ENCODE measurements at regions of chrX and their contacts with region 1.

Region 1: GRCh38 chrX:9662148-9662547 is 103.5 kb downstream of the GPR143 start:
- DNase-seq: peak; percentile 87
- ATAC-seq: peak; percentile 83
- H3K4me3 ChIP-seq: no peak overlapping the region
- H3K27ac ChIP-seq: peak overlapping the region; percentile 89
- H3K4me1 ChIP-seq: peaks cover 57% of the 10 kb centered on the region
- H3K27me3 ChIP-seq: no peaks in the 10 kb centered on the region
- CTCF ChIP-seq: no peak

Region 2: GRCh38 chrX:9628779-9629493 is 33.2 kb before region 1 on chrX:
- CTCF ChIA-PET with region 1: no interaction called
- POLR2A ChIA-PET with region 1: interaction called, 14 read pairs
- intact Hi-C with region 1: no loop called
- DNase-seq: no peak
- ATAC-seq: no peak
- H3K4me3 ChIP-seq: no peak overlapping the region
- H3K27ac ChIP-seq: no peak overlapping the region
- H3K4me1 ChIP-seq: peaks cover 13% of the 10 kb centered on the region
- H3K27me3 ChIP-seq: no peaks in the 10 kb centered on the region
- CTCF ChIP-seq: no peak

Measured in PC-3 (cell line).